CD8-positive, alpha-beta T cell (primary cell): ENCODE measurements at regions of chr1 and their contacts with region 1.

Region 1: DNA sequence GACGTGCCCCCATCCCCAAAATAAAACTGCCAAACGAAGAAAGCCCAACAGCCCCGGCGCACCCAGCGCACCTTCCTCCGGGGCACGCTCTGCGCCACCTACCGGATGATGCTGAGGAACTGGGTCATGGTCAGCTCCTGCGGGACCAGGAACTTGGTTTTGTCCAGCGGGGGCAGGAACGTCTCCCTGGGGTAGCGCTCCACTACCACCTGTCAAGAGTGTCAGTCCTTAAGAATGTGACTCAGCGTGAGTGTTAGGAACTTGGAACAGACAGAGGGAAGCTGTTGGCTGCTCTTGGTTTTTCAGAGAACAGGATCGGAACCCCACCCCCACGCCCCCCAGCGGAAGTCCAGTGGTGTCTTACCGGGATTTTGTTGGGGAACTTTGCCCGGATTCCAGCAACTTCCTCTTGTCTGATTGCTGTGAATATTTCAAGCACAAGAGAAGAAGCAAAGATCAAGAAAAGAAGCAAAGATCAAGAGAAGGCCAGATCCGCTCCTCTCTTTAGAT is 431 bp downstream of the MAP1LC3C start:
- DNase-seq: peak; percentile 1 to 67 (median 37)
- ATAC-seq: no peak
- H3K4me3 ChIP-seq: peak overlapping the region in 1 of 2 experiments; percentile 13
- H3K4me3 Mint-ChIP-seq: peak overlapping the region; percentile 49
- H3K27ac ChIP-seq: no peak overlapping the region
- H3K27ac Mint-ChIP-seq: no peak overlapping the region
- H3K4me1 ChIP-seq: no peaks in the 10 kb centered on the region
- H3K4me1 Mint-ChIP-seq: no peaks in the 10 kb centered on the region
- H3K27me3 ChIP-seq: no peaks in the 10 kb centered on the region
- H3K27me3 Mint-ChIP-seq: peaks cover 12% of the 10 kb centered on the region
- CTCF ChIP-seq: peak; percentile 57

Region 2: GRCh38 chr1:241730031-241730430 is 268.4 kb before region 1 on chr1:
- CTCF ChIA-PET with region 1: no interaction called
- POLR2A ChIA-PET with region 1: no interaction called
- intact Hi-C with region 1: no loop called
- DNase-seq: no peak
- ATAC-seq: no peak
- H3K4me3 ChIP-seq: no peak overlapping the region
- H3K4me3 Mint-ChIP-seq: no peak overlapping the region
- H3K27ac ChIP-seq: no peak overlapping the region
- H3K27ac Mint-ChIP-seq: no peak overlapping the region
- H3K4me1 ChIP-seq: no peaks in the 10 kb centered on the region
- H3K4me1 Mint-ChIP-seq: no peaks in the 10 kb centered on the region
- H3K27me3 ChIP-seq: peaks cover 0 to 4% of the 10 kb centered on the region in 2 experiments
- H3K27me3 Mint-ChIP-seq: no peaks in the 10 kb centered on the region
- CTCF ChIP-seq: no peak

Region 3: DNA sequence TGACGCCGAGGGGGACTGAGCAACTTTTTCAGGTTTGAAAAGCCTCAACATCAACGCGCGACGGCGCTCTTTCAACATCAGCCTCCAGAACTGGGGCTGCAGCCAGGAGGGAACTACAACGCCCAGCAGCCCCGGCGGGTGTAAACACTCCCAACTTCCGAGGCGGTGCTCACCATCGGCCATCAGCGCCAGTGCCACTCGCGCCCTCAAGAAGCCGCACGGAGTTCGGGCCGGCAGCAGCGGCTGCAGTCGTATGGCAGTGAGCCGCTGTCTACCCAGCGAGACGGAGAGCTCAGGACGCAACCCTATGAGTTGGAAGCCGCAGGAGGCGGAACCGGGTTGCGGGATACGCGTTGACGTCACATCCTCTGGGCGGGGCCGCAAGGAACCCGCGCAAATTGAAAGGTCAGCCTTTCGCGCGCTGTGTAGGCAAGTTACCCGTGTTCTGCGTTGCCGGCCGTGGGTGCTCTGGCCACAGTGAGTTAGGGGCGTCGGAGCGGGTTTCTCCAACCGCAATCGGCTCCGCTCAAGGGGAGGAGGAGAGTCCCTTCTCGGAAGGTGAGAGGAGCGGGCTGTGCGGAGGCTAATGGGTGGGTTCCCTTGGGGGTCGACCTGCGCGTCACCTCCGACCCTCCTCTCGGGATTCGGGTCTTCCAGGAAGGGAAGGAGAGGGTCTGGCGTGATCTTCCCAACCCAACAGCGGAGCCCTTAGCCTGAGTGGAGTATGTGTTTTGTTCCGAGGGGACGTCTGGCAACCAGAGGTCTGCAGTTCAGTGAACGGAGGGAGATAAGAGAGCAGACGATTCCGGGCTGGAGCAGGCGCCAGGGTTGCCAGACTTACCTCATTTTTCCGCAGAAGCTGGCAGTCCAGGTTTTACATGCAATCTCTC is 150.4 kb before region 1 on chr1 and contains the start of gene EXO1:
- CTCF ChIA-PET with region 1: no interaction called
- POLR2A ChIA-PET with region 1: no interaction called
- intact Hi-C with region 1: loop called in 1 of 2 experiments (anchors 5 kb)
- DNase-seq: peak; percentile 78 to 95 (median 88)
- ATAC-seq: peak; percentile 97
- H3K4me3 ChIP-seq: peak within 1 kb of the TSS; percentile 94 to 100
- H3K4me3 Mint-ChIP-seq: peak within 1 kb of the TSS; percentile 100
- H3K27ac ChIP-seq: peak within 1 kb of the TSS; percentile 94 to 98
- H3K27ac Mint-ChIP-seq: peak within 1 kb of the TSS; percentile 99
- H3K4me1 ChIP-seq: peaks cover 9% of the 10 kb centered on the region
- H3K4me1 Mint-ChIP-seq: peaks cover 18% of the 10 kb centered on the region
- H3K27me3 ChIP-seq: no peaks in the 10 kb centered on the region
- H3K27me3 Mint-ChIP-seq: no peaks in the 10 kb centered on the region
- CTCF ChIP-seq: peak; percentile 29
- total RNA-seq, gene EXO1: 1.5 to 2.4 TPM

Region 4: DNA sequence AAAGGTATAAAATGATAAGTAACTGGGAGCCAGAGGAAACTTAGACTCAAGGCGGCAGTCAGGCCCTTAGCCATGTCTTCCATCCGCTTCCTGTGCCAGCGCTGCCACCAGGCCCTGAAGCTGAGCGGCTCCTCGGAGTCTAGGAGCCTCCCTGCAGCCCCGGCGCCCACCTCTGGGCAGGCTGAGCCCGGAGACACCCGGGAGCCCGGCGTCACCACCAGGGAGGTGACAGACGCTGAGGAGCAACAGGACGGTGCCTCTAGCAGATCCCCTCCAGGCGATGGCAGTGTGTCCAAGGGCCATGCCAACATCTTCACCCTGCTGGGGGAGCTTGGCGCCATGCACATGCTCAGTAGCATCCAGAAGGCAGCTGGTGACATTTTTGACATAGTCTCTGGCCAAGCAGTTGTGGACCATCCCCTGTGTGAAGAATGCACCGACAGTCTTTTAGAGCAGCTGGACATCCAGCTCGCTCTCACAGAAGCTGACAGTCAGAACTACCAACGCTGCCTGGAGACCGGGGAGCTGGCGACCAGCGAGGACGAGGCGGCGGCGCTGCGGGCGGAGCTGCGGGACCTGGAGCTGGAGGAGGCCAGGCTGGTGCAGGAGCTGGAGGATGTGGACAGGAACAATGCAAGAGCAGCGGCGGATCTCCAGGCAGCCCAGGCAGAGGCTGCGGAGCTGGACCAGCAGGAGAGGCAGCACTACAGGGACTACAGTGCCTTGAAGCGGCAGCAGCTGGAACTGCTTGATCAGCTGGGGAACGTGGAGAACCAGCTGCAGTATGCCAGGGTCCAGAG is 40.6 kb before region 1 on chr1 and contains the start of gene BECN2:
- CTCF ChIA-PET with region 1: no interaction called
- POLR2A ChIA-PET with region 1: no interaction called
- intact Hi-C with region 1: no loop called
- DNase-seq: no peak
- ATAC-seq: no peak
- H3K4me3 ChIP-seq: no peak within 1 kb of the TSS
- H3K4me3 Mint-ChIP-seq: no peak within 1 kb of the TSS
- H3K27ac ChIP-seq: no peak within 1 kb of the TSS
- H3K27ac Mint-ChIP-seq: no peak within 1 kb of the TSS
- H3K4me1 ChIP-seq: no peaks in the 10 kb centered on the region
- H3K4me1 Mint-ChIP-seq: no peaks in the 10 kb centered on the region
- H3K27me3 ChIP-seq: no peaks in the 10 kb centered on the region
- H3K27me3 Mint-ChIP-seq: peaks cover 2% of the 10 kb centered on the region
- CTCF ChIP-seq: no peak
- total RNA-seq, gene BECN2: not detected

Region 5: GRCh38 chr1:242033447-242033846 is 35.0 kb after region 1 on chr1:
- CTCF ChIA-PET with region 1: no interaction called
- POLR2A ChIA-PET with region 1: no interaction called
- intact Hi-C with region 1: no loop called
- DNase-seq: no peak
- ATAC-seq: no peak
- H3K4me3 ChIP-seq: no peak overlapping the region
- H3K4me3 Mint-ChIP-seq: no peak overlapping the region
- H3K27ac ChIP-seq: no peak overlapping the region
- H3K27ac Mint-ChIP-seq: no peak overlapping the region
- H3K4me1 ChIP-seq: no peaks in the 10 kb centered on the region
- H3K4me1 Mint-ChIP-seq: no peaks in the 10 kb centered on the region
- H3K27me3 ChIP-seq: no peaks in the 10 kb centered on the region
- H3K27me3 Mint-ChIP-seq: peaks cover 8% of the 10 kb centered on the region
- CTCF ChIP-seq: no peak